ENCODE measurements at regions of chr21 and their contacts with region 1.

Region 1: GRCh38 chr21:43687566-43688286 is 28.4 kb downstream of the RRP1B start:
- DNase-seq: no peak
- ATAC-seq: no peak

Region 2: DNA sequence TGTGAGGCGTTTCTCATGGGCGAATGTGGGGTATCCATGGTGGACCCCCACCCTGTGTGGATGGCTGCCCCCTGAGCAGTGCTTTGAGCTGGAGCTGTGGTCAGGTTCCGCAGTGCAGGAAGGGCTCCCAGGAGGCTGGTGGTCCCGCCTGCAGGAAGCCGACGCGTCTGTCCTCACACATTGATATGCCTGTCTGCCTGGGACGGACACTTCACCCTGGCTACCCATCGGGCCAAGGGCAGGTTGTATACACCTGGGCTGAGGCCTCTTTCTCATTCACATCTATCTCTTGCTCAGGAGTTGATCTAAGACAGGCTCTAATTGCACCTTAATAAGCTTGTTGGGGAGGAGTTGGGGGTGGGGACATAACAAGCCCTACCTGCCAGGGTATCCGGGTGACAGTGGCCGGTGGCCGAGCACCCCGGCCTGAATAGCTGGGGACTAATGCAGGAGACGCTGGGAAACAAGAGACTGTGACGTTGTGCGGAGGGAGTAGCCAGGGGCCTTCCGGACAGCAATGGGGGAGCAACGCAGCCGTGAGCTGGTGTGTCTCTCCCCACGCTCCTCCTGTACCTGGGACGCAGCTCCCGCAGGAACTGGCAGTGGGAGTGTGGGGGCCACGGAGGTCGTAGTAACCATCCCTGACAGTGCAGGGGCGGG is 52.9 kb after region 1 on chr21:
- intact Hi-C with region 1: loop called (anchors 10 kb)
- DNase-seq: no peak
- ATAC-seq: no peak

Region 3: DNA sequence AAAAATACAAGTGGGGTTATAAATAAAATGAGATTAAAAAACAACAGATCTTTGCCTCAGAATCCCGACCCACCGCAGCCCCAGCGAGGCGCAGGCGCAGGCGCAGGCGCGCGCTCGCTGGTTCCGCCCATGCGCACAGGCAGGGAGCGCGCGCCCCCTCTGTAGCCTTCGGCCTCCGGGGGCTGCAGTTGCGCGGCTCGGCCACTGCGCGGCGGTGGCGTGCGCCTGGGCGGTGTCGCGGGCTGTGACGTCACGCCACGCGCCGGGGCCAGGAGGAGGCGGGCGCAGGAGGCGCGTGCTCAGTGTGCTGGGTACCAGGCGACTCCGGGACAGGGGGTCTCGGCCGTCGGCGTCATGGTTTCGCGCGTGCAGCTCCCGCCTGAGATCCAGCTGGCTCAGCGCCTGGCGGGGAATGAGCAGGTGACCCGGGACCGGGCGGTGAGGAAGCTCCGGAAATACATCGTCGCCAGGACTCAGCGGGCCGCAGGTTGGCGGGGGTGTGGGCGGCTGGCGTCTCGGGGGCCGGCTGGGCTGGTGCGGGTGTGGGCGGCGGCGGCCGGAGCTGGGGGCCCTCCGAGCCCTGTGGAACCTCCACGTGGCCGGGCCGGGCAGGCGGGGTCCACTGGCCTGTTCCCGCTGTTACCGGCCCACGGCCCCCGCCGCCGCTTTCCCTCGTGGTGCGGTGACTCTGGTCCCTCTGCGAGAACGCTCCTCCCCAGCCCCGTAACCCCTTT is 101.7 kb after region 1 on chr21 and contains the start of gene RRP1:
- intact Hi-C with region 1: loop called (anchors 10 kb)
- DNase-seq: peak; percentile 97
- ATAC-seq: peak; percentile 98
- total RNA-seq, gene RRP1: 10.1 TPM